H1 (cell line): ENCODE measurements at regions of chr11 and their contacts with region 1.

Region 1: DNA sequence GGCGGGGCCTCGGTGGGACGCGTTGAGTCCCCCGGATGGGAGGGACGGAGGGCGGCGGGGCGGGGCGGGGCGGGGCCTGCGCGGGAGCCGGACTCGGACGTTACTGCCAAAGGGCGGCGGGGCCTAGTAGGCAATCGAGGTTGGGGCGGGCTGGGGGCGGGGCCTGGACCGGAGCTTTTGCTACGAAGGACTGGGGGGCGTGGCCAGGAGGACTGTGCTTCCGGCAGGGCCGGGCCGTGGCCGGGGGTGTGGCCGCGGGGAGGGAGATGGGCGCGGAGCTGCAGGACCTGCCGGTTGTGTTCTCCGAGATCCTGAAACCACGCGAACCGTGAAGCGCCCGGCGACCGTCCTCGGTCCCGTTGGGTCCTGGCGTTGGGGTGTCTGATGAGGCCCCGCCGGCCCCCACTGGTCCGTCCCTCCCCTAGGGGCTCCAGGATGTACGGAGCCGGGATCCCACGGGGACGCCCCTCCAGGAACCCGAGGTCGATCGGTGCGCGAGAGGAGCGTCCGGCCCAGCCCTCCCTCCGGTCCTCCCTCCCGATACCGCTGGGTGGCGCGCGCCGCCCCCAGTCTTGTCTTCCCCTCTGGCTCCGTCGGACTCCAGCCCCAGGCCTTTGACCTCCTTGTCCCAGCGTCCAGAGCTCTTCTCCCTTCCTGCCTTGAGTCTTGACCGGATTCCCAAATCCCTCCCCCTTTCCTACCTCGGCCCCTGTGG is 648 bp upstream of the NUDT8 start:
- DNase-seq: peak; percentile 95 to 98
- H3K4me3 ChIP-seq: peak overlapping the region; percentile 51 to 84 (median 78)
- H3K27ac ChIP-seq: peak overlapping the region; percentile 35; the same call in 1 of the 2 replicates
- H3K4me1 ChIP-seq: peaks cover 0 to 29% (median 18%) of the 10 kb centered on the region in 4 experiments; a peak in 6 of 7 replicates
- H3K27me3 ChIP-seq: no peaks in the 10 kb centered on the region; a peak in 1 of 7 replicates
- CTCF ChIP-seq: peak in 2 of 3 experiments; percentile 74 to 79; a peak in 3 of 4 replicates
- EP300 ChIP-seq: no peak
- POLR2A ChIP-seq: peak in 1 of 2 experiments; percentile 91; a peak in 2 of 3 replicates
- RAD21 ChIP-seq: peak; percentile 60 to 70

Region 2: GRCh38 chr11:67572747-67573419 is 57.5 kb before region 1 on chr11:
- CTCF ChIA-PET with region 1: interaction called, 19 read pairs
- POLR2A ChIA-PET with region 1: interaction called, 21 read pairs
- DNase-seq: no peak
- H3K4me3 ChIP-seq: no peak overlapping the region
- H3K27ac ChIP-seq: no peak overlapping the region
- H3K4me1 ChIP-seq: peaks cover 0 to 3% (median 0%) of the 10 kb centered on the region in 4 experiments; a peak in 1 of 7 replicates
- H3K27me3 ChIP-seq: no peaks in the 10 kb centered on the region; a peak in 1 of 7 replicates
- CTCF ChIP-seq: peak; percentile 72 to 76 (median 73)
- EP300 ChIP-seq: no peak
- POLR2A ChIP-seq: no peak
- RAD21 ChIP-seq: peak; percentile 75 to 78

Region 3: GRCh38 chr11:67613960-67614715 is 16.2 kb before region 1 on chr11:
- CTCF ChIA-PET with region 1: interaction called, 117 read pairs
- POLR2A ChIA-PET with region 1: interaction called, 194 read pairs
- DNase-seq: peak in 1 of 2 experiments; percentile 93
- H3K4me3 ChIP-seq: peak overlapping the region in 1 of 4 experiments; percentile 18; a peak in 1 of 8 replicates
- H3K27ac ChIP-seq: no peak overlapping the region
- H3K4me1 ChIP-seq: peaks cover 13 to 36% (median 31%) of the 10 kb centered on the region in 4 experiments
- H3K27me3 ChIP-seq: peaks cover 0 to 10% (median 5%) of the 10 kb centered on the region in 4 experiments; a peak in 6 of 7 replicates
- CTCF ChIP-seq: peak in 2 of 3 experiments; percentile 77 to 79; a peak in 3 of 4 replicates
- EP300 ChIP-seq: no peak
- POLR2A ChIP-seq: no peak
- RAD21 ChIP-seq: peak; percentile 24 to 45

Region 4: GRCh38 chr11:67648140-67649123 is 18.0 kb after region 1 on chr11:
- CTCF ChIA-PET with region 1: interaction called, 99 read pairs
- POLR2A ChIA-PET with region 1: interaction called, 4 read pairs
- DNase-seq: peak in 1 of 2 experiments; percentile 64
- H3K4me3 ChIP-seq: no peak overlapping the region
- H3K27ac ChIP-seq: no peak overlapping the region
- H3K4me1 ChIP-seq: peaks cover 0 to 9% (median 0%) of the 10 kb centered on the region in 4 experiments; a peak in 2 of 7 replicates
- H3K27me3 ChIP-seq: no peaks in the 10 kb centered on the region; a peak in 2 of 7 replicates
- CTCF ChIP-seq: peak in 2 of 3 experiments; percentile 73 to 98; a peak in 3 of 4 replicates
- EP300 ChIP-seq: no peak
- POLR2A ChIP-seq: no peak
- RAD21 ChIP-seq: peak; percentile 58 to 68

Region 5: DNA sequence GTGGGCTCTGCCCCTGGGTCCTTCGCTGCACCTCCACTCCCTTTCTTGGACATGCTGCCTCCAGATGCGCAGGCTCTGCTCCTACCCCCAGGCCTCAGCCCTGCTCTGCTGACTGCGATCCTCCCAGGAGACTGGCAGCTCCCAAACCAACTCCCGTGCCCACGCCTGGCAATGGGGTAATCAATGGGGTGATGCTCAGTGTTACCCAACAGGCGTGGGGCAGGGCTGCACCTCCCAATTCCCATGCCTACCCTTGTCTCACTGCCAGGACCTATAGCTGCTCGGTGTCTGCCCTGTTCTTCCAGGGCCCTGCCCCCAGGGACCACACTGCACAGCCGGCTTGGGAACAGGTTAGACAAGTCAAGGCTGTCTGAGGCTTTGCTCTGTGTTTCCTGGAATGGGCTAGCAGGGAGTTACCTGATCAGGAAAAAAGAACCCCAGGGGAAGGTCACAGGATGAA is 44.1 kb after region 1 on chr11 and contains the start of gene ALDH3B2:
- CTCF ChIA-PET with region 1: interaction called, 12 read pairs
- POLR2A ChIA-PET with region 1: no interaction called
- DNase-seq: peak in 1 of 2 experiments; percentile 48
- H3K4me3 ChIP-seq: no peak within 1 kb of the TSS
- H3K27ac ChIP-seq: no peak within 1 kb of the TSS
- H3K4me1 ChIP-seq: peaks cover 0 to 5% (median 0%) of the 10 kb centered on the region in 4 experiments; a peak in 3 of 7 replicates
- H3K27me3 ChIP-seq: no peaks in the 10 kb centered on the region
- CTCF ChIP-seq: no peak
- EP300 ChIP-seq: no peak
- POLR2A ChIP-seq: no peak
- RAD21 ChIP-seq: no peak
- total RNA-seq, gene ALDH3B2: not detected in 2 replicates

Region 6: DNA sequence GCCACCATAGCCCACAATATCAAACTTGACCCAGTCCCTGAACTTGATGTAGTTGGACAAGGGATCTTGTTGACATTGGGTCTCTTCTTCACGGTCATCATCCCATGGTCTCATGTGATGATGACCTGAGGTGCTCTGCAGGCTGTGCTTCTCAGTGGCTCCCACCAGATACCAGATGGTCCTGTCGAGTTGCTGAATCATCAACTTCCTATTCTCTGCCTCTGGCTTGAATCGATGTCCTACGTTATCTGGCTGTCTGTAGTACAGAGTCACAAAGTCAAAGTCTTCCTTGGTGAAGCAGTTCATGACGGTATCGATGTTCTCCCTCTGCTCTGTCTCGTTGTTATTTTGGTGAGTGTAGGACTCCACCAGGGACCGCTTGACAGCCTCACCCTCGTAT is 189.7 kb after region 1 on chr11:
- CTCF ChIA-PET with region 1: no interaction called
- POLR2A ChIA-PET with region 1: no interaction called
- DNase-seq: no peak
- H3K4me3 ChIP-seq: no peak overlapping the region
- H3K27ac ChIP-seq: no peak overlapping the region
- H3K4me1 ChIP-seq: no peaks in the 10 kb centered on the region
- H3K27me3 ChIP-seq: no peaks in the 10 kb centered on the region
- CTCF ChIP-seq: no peak
- EP300 ChIP-seq: no peak
- POLR2A ChIP-seq: no peak
- RAD21 ChIP-seq: no peak